ENCODE measurements at regions of chr5 and their contacts with region 1.

Region 1: GRCh38 chr5:127313847-127314473 is 23.4 kb downstream of the MEGF10 start:
- DNase-seq: peak; percentile 73
- H3K4me3 ChIP-seq: no peak overlapping the region
- H3K27ac ChIP-seq: no peak overlapping the region
- H3K4me1 ChIP-seq: no peaks in the 10 kb centered on the region
- H3K27me3 ChIP-seq: peaks cover 40% of the 10 kb centered on the region

Region 2: GRCh38 chr5:126656396-126657007 is 657.5 kb before region 1 on chr5:
- in situ Hi-C with region 1: loop called (anchors 25 kb)
- DNase-seq: peak; percentile 71
- H3K4me3 ChIP-seq: no peak overlapping the region
- H3K27ac ChIP-seq: no peak overlapping the region
- H3K4me1 ChIP-seq: no peaks in the 10 kb centered on the region
- H3K27me3 ChIP-seq: no peaks in the 10 kb centered on the region